ENCODE measurements at regions of chr3 and their contacts with region 1.

Region 1: GRCh38 chr3:64484289-64484992 is 203.4 kb downstream of the ADAMTS9 start:
- DNase-seq: peak; percentile 83 to 84
- H3K4me3 ChIP-seq: no peak overlapping the region
- H3K27ac ChIP-seq: no peak overlapping the region
- H3K4me1 ChIP-seq: no peaks in the 10 kb centered on the region
- H3K27me3 ChIP-seq: no peaks in the 10 kb centered on the region
- CTCF ChIP-seq: peak; percentile 84 to 93 (median 87)
- POLR2A ChIP-seq: no peak

Region 2: GRCh38 chr3:64023187-64023848 is 461.1 kb before region 1 on chr3 and contains the start of gene PSMD6:
- intact Hi-C with region 1: loop called (anchors 10 kb)
- DNase-seq: peak; percentile 79 to 90
- H3K4me3 ChIP-seq: peak within 1 kb of the TSS; percentile 67 to 95
- H3K27ac ChIP-seq: peak within 1 kb of the TSS; percentile 81 to 82
- H3K4me1 ChIP-seq: peaks cover 0 to 5% of the 10 kb centered on the region in 2 donors
- H3K27me3 ChIP-seq: no peaks in the 10 kb centered on the region
- CTCF ChIP-seq: peak; percentile 97 to 100 (median 100)
- POLR2A ChIP-seq: peak in 1 of 2 donors; percentile 41
- total RNA-seq, gene PSMD6: 49.2 to 72.1 (median 65.0) TPM

Measured in uterus (tissue), 4 donors.